Caco-2 (cell line): ENCODE measurements at regions of chr2 and their contacts with region 1.

Region 1: DNA sequence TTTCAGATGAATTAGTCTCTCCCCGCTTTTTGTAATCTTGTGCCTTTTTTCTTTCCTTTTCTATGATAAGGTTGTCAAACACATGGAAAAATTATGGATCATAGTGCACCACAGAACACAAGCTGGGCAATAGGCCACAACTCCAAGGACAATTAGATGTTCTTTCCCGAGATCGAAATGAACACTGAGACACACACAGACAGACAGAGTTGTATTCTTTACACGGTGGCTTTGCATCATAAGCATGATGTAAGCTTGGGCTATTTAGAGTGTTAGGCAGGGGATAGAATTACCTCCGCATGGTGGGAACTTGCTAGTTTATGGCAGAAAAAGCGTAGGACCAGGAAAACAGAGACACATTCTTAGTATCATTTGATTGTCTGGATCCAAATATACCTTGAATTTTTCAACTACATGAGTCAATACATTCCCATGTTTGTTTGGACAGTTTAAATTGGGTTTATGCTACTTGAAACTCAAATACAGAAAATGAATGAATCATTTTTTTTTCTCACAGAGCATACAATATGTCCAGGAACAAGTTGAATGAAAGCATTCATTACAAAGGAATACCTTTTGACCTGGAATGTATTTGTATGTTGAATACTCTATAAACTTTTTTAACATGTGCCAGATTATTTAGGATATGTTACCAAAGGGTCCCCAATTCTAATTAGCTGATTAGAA is 1611.5 kb upstream of the TMEFF2 start:
- DNase-seq: no peak
- H3K4me3 ChIP-seq: no peak overlapping the region
- H3K4me3 Mint-ChIP-seq: no peak overlapping the region
- H3K27ac Mint-ChIP-seq: no peak overlapping the region
- H3K4me1 ChIP-seq: no peaks in the 10 kb centered on the region
- H3K4me1 Mint-ChIP-seq: no peaks in the 10 kb centered on the region
- H3K27me3 ChIP-seq: no peaks in the 10 kb centered on the region
- H3K27me3 Mint-ChIP-seq: no peaks in the 10 kb centered on the region
- CTCF ChIP-seq: no peak

Region 2: GRCh38 chr2:193442293-193442692 is 363.9 kb before region 1 on chr2:
- CTCF ChIA-PET with region 1: no interaction called
- POLR2A ChIA-PET with region 1: no interaction called
- intact Hi-C with region 1: no loop called
- DNase-seq: no peak
- H3K4me3 ChIP-seq: no peak overlapping the region
- H3K4me3 Mint-ChIP-seq: no peak overlapping the region
- H3K27ac Mint-ChIP-seq: no peak overlapping the region
- H3K4me1 ChIP-seq: no peaks in the 10 kb centered on the region
- H3K4me1 Mint-ChIP-seq: peaks cover 7% of the 10 kb centered on the region
- H3K27me3 ChIP-seq: no peaks in the 10 kb centered on the region
- H3K27me3 Mint-ChIP-seq: no peaks in the 10 kb centered on the region
- CTCF ChIP-seq: no peak

Region 3: GRCh38 chr2:193847140-193847539 is 40.9 kb after region 1 on chr2:
- CTCF ChIA-PET with region 1: no interaction called
- POLR2A ChIA-PET with region 1: no interaction called
- intact Hi-C with region 1: loop called (anchors 5 kb)
- DNase-seq: no peak
- H3K4me3 ChIP-seq: no peak overlapping the region
- H3K4me3 Mint-ChIP-seq: no peak overlapping the region
- H3K27ac Mint-ChIP-seq: no peak overlapping the region
- H3K4me1 ChIP-seq: no peaks in the 10 kb centered on the region
- H3K4me1 Mint-ChIP-seq: no peaks in the 10 kb centered on the region
- H3K27me3 ChIP-seq: no peaks in the 10 kb centered on the region
- H3K27me3 Mint-ChIP-seq: no peaks in the 10 kb centered on the region
- CTCF ChIP-seq: no peak